Activated naive CD4-positive, alpha-beta T cell treated with anti-CD3 and anti-CD28 coated beads for 36 hours (primary cell): ENCODE measurements at regions of chr11 and their contacts with region 1.

Region 1: GRCh38 chr11:105297463-105297862 is 157.9 kb upstream of the CARD18 start:
- DNase-seq: no peak
- H3K4me3 Mint-ChIP-seq: no peak overlapping the region
- H3K27ac Mint-ChIP-seq: peak overlapping the region; percentile 34
- H3K4me1 Mint-ChIP-seq: peaks cover 18% of the 10 kb centered on the region
- H3K27me3 Mint-ChIP-seq: peaks cover 11% of the 10 kb centered on the region

Region 2: GRCh38 chr11:104624021-104624420 is 673.4 kb before region 1 on chr11:
- CTCF ChIA-PET with region 1: no interaction called
- intact Hi-C with region 1: loop called (anchors 1 kb)
- DNase-seq: no peak
- H3K4me3 Mint-ChIP-seq: no peak overlapping the region
- H3K27ac Mint-ChIP-seq: no peak overlapping the region
- H3K4me1 Mint-ChIP-seq: peaks cover 20% of the 10 kb centered on the region
- H3K27me3 Mint-ChIP-seq: no peaks in the 10 kb centered on the region

Region 3: DNA sequence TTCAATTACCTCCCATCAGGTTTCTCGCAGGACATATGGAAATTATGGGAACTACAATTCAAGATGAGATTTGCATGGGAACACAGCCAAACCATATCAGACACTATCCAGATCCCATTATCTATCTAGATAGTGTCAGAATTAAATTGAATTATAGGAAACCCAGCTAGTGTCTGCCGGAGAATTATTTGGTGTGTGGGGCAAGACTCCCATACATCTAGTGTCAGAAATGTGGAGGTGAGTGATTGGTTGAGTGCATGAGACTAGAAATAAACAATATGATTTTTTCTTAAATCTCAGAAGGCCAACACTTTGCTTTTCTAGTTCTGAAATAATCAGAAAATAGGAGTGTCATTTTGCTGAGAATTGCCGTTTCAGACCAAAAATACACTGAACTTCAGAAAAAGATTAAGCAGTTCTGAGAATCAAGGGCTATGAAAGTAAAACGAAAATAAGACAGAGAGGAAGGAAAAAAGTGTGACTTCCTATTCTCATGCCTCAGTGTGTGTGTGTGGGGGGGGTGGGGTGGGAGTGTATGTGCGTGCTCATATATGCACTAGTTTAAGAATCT is 420.5 kb before region 1 on chr11:
- CTCF ChIA-PET with region 1: no interaction called
- intact Hi-C with region 1: loop called (anchors 5 kb)
- DNase-seq: no peak
- H3K4me3 Mint-ChIP-seq: peak overlapping the region; percentile 22
- H3K27ac Mint-ChIP-seq: peak overlapping the region; percentile 59
- H3K4me1 Mint-ChIP-seq: peaks cover 32% of the 10 kb centered on the region
- H3K27me3 Mint-ChIP-seq: no peaks in the 10 kb centered on the region

Region 4: DNA sequence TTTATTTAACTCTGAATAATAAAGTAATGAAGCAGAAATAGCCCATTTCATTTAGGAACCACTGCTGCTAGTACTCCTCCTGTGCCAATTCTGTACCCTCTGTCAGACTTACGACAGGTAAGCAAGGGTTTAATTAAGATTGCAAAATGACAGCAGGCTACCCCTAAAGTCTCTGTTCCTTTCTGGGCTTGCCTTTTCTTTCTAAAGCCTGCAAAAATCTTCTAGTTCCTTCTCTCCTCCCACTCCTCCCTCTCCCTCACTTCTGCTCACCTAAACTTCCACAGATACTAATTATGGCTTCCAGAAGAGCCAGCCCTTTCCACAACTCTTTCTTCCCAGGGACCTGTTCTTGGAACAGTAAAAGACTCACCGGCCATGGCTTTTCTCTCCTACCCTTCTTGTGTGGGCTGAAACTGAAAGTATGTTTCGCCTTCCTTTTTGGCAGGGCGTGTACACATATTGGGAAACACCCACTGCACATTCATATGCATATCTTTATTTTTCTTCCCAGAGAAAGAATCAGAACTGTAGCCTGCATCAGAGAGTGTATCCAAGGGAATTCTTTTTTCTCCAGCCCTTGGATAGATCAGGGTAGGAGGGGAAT is 252.4 kb before region 1 on chr11 and contains the start of gene CARD16:
- CTCF ChIA-PET with region 1: no interaction called
- intact Hi-C with region 1: loop called (anchors 1 kb)
- DNase-seq: peak; percentile 64
- H3K4me3 Mint-ChIP-seq: peak within 1 kb of the TSS; percentile 83
- H3K27ac Mint-ChIP-seq: peak within 1 kb of the TSS; percentile 82
- H3K4me1 Mint-ChIP-seq: peaks cover 46% of the 10 kb centered on the region
- H3K27me3 Mint-ChIP-seq: no peaks in the 10 kb centered on the region
- total RNA-seq, gene CARD16: 9.5 to 10.9 TPM

Region 5: DNA sequence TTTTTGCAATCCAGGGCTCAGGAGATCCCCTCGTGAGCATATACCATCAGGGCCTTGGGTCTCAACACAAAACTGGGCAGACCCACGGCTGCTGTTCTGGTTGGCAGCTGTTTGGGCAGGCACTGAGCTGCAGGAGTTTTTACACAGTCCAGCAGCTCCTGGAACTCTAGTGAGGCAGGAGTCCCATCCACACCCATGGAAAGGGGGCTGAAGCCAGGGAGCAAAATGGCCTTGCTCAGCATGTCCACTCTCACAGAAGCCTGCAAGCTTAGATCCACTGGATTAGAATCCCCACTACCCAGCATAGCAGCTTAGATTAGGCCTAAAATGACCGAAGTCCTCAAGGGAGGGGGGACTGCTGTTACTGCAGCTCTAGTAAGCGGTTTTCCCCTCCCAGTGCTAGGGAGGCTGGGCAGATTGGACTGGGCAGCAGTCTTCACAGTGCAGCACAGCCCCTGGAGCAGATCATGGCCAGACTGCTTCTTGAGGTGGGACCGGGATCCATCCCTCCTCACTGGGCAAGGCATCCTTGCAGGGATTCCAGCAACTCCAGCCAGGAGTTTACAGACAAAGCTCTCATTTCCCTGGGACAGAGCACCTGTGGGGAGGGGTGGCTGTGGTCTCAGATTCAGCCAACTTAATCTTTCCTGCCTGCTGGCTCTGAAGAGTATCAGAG is 215.9 kb before region 1 on chr11:
- CTCF ChIA-PET with region 1: no interaction called
- intact Hi-C with region 1: loop called (anchors 1 kb)
- DNase-seq: no peak
- H3K4me3 Mint-ChIP-seq: no peak overlapping the region
- H3K27ac Mint-ChIP-seq: no peak overlapping the region
- H3K4me1 Mint-ChIP-seq: peaks cover 20% of the 10 kb centered on the region
- H3K27me3 Mint-ChIP-seq: peaks cover 8% of the 10 kb centered on the region

Region 6: DNA sequence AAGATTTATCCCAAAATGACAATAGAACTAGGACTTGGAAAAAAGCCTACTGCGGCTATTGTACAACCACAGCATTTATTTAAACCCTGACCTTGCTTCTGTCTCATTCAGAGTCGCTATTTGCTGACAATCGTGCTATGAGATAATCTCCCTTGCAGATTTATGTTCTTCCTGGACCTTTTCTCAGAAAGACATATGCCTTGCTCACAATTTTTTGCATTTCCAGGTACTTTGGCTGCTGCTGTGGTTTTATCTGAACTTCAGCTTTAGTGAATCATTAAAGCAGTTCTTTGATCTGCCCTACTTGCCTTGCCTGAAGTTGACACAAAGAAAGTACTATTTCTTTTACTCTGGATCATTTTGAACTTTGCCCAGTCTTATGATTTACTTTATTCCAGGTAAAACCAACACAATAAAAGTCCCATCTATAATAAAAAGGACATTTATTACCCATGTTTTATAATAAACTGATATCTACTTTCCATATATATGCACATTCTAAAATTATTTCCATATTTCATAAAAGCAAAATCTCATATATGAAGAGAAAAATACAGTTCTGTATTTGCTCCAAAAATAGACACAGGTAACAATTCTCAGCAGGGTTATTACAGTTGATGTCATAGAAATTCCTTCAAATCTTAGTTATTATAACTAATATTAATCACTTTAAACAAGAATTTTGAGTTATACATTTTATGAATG is 94.5 kb before region 1 on chr11:
- CTCF ChIA-PET with region 1: no interaction called
- intact Hi-C with region 1: loop called (anchors 1 kb)
- DNase-seq: peak; percentile 32
- H3K4me3 Mint-ChIP-seq: no peak overlapping the region
- H3K27ac Mint-ChIP-seq: peak overlapping the region; percentile 15
- H3K4me1 Mint-ChIP-seq: peaks cover 16% of the 10 kb centered on the region
- H3K27me3 Mint-ChIP-seq: no peaks in the 10 kb centered on the region

Region 7: GRCh38 chr11:105229257-105229656 is 68.2 kb before region 1 on chr11:
- CTCF ChIA-PET with region 1: no interaction called
- intact Hi-C with region 1: no loop called
- DNase-seq: no peak
- H3K4me3 Mint-ChIP-seq: no peak overlapping the region
- H3K27ac Mint-ChIP-seq: no peak overlapping the region
- H3K4me1 Mint-ChIP-seq: no peaks in the 10 kb centered on the region
- H3K27me3 Mint-ChIP-seq: peaks cover 11% of the 10 kb centered on the region

Region 8: GRCh38 chr11:105357807-105358163 is 60.3 kb after region 1 on chr11:
- CTCF ChIA-PET with region 1: no interaction called
- intact Hi-C with region 1: no loop called
- DNase-seq: no peak
- H3K4me3 Mint-ChIP-seq: no peak overlapping the region
- H3K27ac Mint-ChIP-seq: no peak overlapping the region
- H3K4me1 Mint-ChIP-seq: no peaks in the 10 kb centered on the region
- H3K27me3 Mint-ChIP-seq: peaks cover 7% of the 10 kb centered on the region